B cell (primary cell): ENCODE measurements at regions of chr12 and their contacts with region 1.

Region 1: GRCh38 chr12:111405149-111405860 is 418 bp upstream of the SH2B3 start:
- DNase-seq: peak; percentile 100
- ATAC-seq: peak; percentile 71
- H3K4me3 ChIP-seq: peak overlapping the region in 4 of 5 experiments; percentile 57 to 94 (median 60)
- H3K4me3 Mint-ChIP-seq: peak overlapping the region; percentile 85
- H3K27ac ChIP-seq: peak overlapping the region; percentile 73 to 97
- H3K27ac Mint-ChIP-seq: peak overlapping the region; percentile 92
- H3K4me1 ChIP-seq: peaks cover 58 to 67% of the 10 kb centered on the region in 2 donors
- H3K4me1 Mint-ChIP-seq: peaks cover 58% of the 10 kb centered on the region
- H3K27me3 ChIP-seq: no peaks in the 10 kb centered on the region
- H3K27me3 Mint-ChIP-seq: no peaks in the 10 kb centered on the region
- CTCF ChIP-seq: peak; percentile 81

Region 2: GRCh38 chr12:111359231-111359913 is 45.9 kb before region 1 on chr12:
- CTCF ChIA-PET with region 1: interaction called, 5 read pairs
- POLR2A ChIA-PET with region 1: no interaction called
- intact Hi-C with region 1: loop called (anchors 1 kb)
- DNase-seq: peak; percentile 6
- ATAC-seq: no peak
- H3K4me3 ChIP-seq: no peak overlapping the region
- H3K4me3 Mint-ChIP-seq: peak overlapping the region; percentile 84
- H3K27ac ChIP-seq: no peak overlapping the region
- H3K27ac Mint-ChIP-seq: peak overlapping the region; percentile 93
- H3K4me1 ChIP-seq: peaks cover 56 to 62% of the 10 kb centered on the region in 2 donors
- H3K4me1 Mint-ChIP-seq: peaks cover 67% of the 10 kb centered on the region
- H3K27me3 ChIP-seq: no peaks in the 10 kb centered on the region
- H3K27me3 Mint-ChIP-seq: no peaks in the 10 kb centered on the region
- CTCF ChIP-seq: no peak

Region 3: DNA sequence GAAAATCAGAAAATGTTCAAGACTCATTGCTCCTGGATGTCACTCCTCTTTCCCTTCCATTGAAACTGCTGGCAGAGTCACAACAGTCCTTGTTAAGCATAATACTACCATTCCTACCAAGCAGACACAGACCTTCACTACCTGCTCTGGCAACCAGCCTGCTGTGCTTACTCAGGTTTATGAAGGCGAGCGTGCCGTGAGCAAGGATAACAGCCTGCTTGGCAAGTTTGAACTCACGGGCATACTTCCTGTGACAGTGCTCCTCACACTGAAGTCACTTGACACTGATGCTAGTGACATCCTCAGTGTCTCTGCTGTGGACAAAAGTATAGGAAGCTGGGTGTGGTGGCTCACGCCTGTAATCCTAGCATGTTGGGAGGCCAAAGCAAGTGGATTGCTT is 20.7 kb before region 1 on chr12:
- CTCF ChIA-PET with region 1: no interaction called
- POLR2A ChIA-PET with region 1: no interaction called
- intact Hi-C with region 1: no loop called
- DNase-seq: no peak
- ATAC-seq: no peak
- H3K4me3 ChIP-seq: no peak overlapping the region
- H3K4me3 Mint-ChIP-seq: no peak overlapping the region
- H3K27ac ChIP-seq: no peak overlapping the region
- H3K27ac Mint-ChIP-seq: no peak overlapping the region
- H3K4me1 ChIP-seq: peaks cover 0 to 5% of the 10 kb centered on the region in 2 donors
- H3K4me1 Mint-ChIP-seq: peaks cover 7% of the 10 kb centered on the region
- H3K27me3 ChIP-seq: no peaks in the 10 kb centered on the region
- H3K27me3 Mint-ChIP-seq: no peaks in the 10 kb centered on the region
- CTCF ChIP-seq: no peak

Region 4: GRCh38 chr12:111424793-111425251 is 19.5 kb after region 1 on chr12:
- CTCF ChIA-PET with region 1: interaction called, 1,472 read pairs
- POLR2A ChIA-PET with region 1: interaction called, 14 read pairs
- intact Hi-C with region 1: loop called (anchors 1 kb)
- DNase-seq: no peak
- ATAC-seq: no peak
- H3K4me3 ChIP-seq: no peak overlapping the region
- H3K4me3 Mint-ChIP-seq: no peak overlapping the region
- H3K27ac ChIP-seq: peak overlapping the region in 1 of 2 donors; percentile 84
- H3K27ac Mint-ChIP-seq: peak overlapping the region; percentile 32
- H3K4me1 ChIP-seq: peaks cover 26 to 52% of the 10 kb centered on the region in 2 donors
- H3K4me1 Mint-ChIP-seq: peaks cover 54% of the 10 kb centered on the region
- H3K27me3 ChIP-seq: no peaks in the 10 kb centered on the region
- H3K27me3 Mint-ChIP-seq: no peaks in the 10 kb centered on the region
- CTCF ChIP-seq: no peak

Region 5: GRCh38 chr12:111444925-111445725 is 39.8 kb after region 1 on chr12:
- CTCF ChIA-PET with region 1: interaction called, 1,472 read pairs
- POLR2A ChIA-PET with region 1: interaction called, 5 read pairs
- intact Hi-C with region 1: loop called (anchors 1 kb)
- DNase-seq: peak; percentile 95
- ATAC-seq: peak; percentile 96
- H3K4me3 ChIP-seq: no peak overlapping the region
- H3K4me3 Mint-ChIP-seq: peak overlapping the region; percentile 55
- H3K27ac ChIP-seq: peak overlapping the region; percentile 79 to 89
- H3K27ac Mint-ChIP-seq: peak overlapping the region; percentile 83
- H3K4me1 ChIP-seq: peaks cover 35 to 80% of the 10 kb centered on the region in 2 donors
- H3K4me1 Mint-ChIP-seq: peaks cover 76% of the 10 kb centered on the region
- H3K27me3 ChIP-seq: no peaks in the 10 kb centered on the region
- H3K27me3 Mint-ChIP-seq: no peaks in the 10 kb centered on the region
- CTCF ChIP-seq: peak; percentile 25

Region 6: GRCh38 chr12:111766608-111767361 is 361.5 kb after region 1 on chr12 and contains the start of gene ALDH2:
- CTCF ChIA-PET with region 1: no interaction called
- POLR2A ChIA-PET with region 1: no interaction called
- intact Hi-C with region 1: loop called (anchors 5 kb)
- DNase-seq: peak; percentile 68
- ATAC-seq: peak; percentile 79
- H3K4me3 ChIP-seq: peak within 1 kb of the TSS; percentile 2 to 74 (median 62)
- H3K4me3 Mint-ChIP-seq: peak within 1 kb of the TSS; percentile 78
- H3K27ac ChIP-seq: peak within 1 kb of the TSS in 1 of 2 donors; percentile 55
- H3K27ac Mint-ChIP-seq: peak within 1 kb of the TSS; percentile 71
- H3K4me1 ChIP-seq: peaks cover 47 to 53% of the 10 kb centered on the region in 2 donors
- H3K4me1 Mint-ChIP-seq: peaks cover 57% of the 10 kb centered on the region
- H3K27me3 ChIP-seq: no peaks in the 10 kb centered on the region
- H3K27me3 Mint-ChIP-seq: no peaks in the 10 kb centered on the region
- CTCF ChIP-seq: no peak
- total RNA-seq, gene ALDH2: 22.3 TPM in 2 replicates